Activated CD8-positive, alpha-beta memory T cell treated with anti-CD3 and anti-CD28 coated beads, Interleukin-2, amount 10 ng/mL, durations not matched to agents 7 days and 5 days (primary cell): ENCODE measurements at regions of chr20 and their contacts with region 1.

Region 1: DNA sequence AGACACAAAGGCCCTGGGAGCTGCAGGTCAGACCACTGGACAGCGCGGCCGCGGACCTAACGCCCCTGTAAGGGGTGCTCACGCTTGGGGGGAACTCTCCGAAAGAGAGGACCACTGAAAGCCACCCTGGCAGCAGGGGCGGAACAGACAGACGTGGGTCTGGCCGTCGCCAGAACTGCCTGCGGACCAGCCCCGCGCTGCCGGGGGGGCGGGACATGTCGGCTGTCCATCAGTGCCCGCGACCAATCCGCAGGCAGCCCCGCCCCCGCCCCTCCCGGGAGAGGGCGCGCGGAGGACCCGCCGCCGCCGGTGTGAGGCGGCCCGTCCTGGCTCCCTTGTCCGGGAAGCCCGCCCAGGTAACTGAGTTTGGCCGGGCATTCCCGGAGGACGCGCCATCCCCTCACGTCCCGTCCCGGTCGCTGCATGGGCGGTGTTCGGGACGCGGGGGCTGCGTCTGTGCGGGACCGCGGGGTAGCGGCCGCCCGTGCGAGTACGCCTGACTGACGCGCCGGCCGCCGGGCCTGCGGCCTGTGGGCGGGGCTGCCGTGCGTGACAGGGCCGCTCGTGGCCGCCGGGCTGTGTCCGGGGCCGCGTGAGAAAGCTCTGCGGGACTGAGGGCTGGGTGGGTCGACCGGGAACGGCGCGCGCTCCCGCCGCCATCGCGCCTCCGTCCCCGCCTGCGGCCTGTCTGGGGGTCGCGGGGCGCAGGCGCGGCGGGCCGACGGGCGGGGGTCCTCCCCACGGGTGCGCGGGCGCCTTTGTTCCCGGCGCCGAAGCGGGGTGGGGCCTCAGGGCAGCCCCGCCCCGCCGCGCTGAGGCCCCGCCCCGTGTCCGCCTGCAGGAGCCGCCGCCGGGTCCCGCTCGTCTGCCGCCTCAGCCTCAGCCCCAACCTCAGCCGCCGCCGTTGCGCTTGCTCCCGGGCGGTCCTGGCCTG is at the start of gene PLCG1:
- DNase-seq: peak; percentile 90
- ATAC-seq: peak; percentile 68
- H3K4me3 Mint-ChIP-seq: peak within 1 kb of the TSS; percentile 91
- H3K27ac Mint-ChIP-seq: peak within 1 kb of the TSS; percentile 90
- H3K4me1 Mint-ChIP-seq: peaks cover 51% of the 10 kb centered on the region
- H3K27me3 Mint-ChIP-seq: no peaks in the 10 kb centered on the region
- total RNA-seq, gene PLCG1: 201 to 337 TPM

Region 2: DNA sequence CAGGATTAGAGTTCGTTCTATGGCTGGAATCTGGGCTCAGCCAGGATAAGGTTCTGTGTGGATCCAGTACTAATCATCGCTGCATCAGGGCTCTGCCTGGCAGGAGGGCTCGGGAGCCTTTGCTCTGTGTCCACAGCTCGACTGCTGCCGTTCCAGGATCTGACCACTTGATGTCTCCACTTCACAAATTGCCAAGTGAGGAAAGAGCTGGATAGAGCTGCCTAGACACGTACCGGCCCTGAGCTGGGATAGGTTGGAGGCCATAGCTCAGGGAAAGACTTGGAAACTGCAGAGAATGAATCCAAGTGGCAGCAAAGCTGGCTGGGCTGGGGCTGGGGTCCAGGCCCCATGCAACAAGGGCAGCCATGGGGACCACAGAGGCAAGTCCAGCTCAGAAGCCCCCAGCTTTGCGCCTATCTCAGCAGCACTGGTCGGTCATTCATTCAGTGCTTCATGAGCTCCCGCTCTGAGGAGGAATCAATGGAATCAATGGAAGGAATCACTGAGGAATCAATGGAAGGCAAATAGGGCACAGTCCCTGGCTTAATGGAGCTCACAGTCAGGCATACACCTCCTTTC is 146.3 kb before region 1 on chr20:
- CTCF ChIA-PET with region 1: interaction called, 23 read pairs
- DNase-seq: peak; percentile 88
- ATAC-seq: peak; percentile 94
- H3K4me3 Mint-ChIP-seq: no peak overlapping the region
- H3K27ac Mint-ChIP-seq: peak overlapping the region; percentile 87
- H3K4me1 Mint-ChIP-seq: peaks cover 51% of the 10 kb centered on the region
- H3K27me3 Mint-ChIP-seq: no peaks in the 10 kb centered on the region

Region 3: GRCh38 chr20:41125530-41126457 is 11.2 kb before region 1 on chr20:
- CTCF ChIA-PET with region 1: interaction called, 36 read pairs
- DNase-seq: no peak
- ATAC-seq: no peak
- H3K4me3 Mint-ChIP-seq: no peak overlapping the region
- H3K27ac Mint-ChIP-seq: no peak overlapping the region
- H3K4me1 Mint-ChIP-seq: peaks cover 11% of the 10 kb centered on the region
- H3K27me3 Mint-ChIP-seq: no peaks in the 10 kb centered on the region

Region 4: DNA sequence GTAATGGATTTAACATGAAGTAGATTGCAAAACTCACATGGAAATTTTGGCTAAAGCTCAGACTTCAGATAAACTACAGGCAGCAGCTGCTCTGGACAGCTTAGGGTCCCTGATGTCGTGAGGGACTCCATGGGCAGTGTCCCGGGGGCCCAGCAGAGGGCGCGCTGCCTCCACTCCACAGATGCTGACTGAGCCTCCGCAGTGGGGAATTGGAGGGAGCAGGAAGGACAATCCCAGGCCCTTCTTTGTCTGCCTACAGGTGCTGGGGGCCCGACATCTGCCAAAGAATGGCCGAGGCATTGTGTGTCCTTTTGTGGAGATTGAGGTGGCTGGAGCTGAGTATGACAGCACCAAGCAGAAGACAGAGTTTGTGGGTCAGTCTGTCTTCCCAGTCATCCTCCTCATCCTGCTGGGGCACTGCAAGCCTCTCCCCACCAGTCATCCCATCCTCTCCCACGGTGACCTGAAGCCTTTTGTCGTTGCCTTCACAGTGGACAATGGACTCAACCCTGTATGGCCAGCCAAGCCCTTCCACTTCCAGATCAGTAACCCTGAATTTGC is 36.3 kb after region 1 on chr20:
- CTCF ChIA-PET with region 1: interaction called, 30 read pairs
- DNase-seq: peak; percentile 63
- ATAC-seq: peak; percentile 81
- H3K4me3 Mint-ChIP-seq: no peak overlapping the region
- H3K27ac Mint-ChIP-seq: no peak overlapping the region
- H3K4me1 Mint-ChIP-seq: peaks cover 15% of the 10 kb centered on the region
- H3K27me3 Mint-ChIP-seq: no peaks in the 10 kb centered on the region

Region 5: DNA sequence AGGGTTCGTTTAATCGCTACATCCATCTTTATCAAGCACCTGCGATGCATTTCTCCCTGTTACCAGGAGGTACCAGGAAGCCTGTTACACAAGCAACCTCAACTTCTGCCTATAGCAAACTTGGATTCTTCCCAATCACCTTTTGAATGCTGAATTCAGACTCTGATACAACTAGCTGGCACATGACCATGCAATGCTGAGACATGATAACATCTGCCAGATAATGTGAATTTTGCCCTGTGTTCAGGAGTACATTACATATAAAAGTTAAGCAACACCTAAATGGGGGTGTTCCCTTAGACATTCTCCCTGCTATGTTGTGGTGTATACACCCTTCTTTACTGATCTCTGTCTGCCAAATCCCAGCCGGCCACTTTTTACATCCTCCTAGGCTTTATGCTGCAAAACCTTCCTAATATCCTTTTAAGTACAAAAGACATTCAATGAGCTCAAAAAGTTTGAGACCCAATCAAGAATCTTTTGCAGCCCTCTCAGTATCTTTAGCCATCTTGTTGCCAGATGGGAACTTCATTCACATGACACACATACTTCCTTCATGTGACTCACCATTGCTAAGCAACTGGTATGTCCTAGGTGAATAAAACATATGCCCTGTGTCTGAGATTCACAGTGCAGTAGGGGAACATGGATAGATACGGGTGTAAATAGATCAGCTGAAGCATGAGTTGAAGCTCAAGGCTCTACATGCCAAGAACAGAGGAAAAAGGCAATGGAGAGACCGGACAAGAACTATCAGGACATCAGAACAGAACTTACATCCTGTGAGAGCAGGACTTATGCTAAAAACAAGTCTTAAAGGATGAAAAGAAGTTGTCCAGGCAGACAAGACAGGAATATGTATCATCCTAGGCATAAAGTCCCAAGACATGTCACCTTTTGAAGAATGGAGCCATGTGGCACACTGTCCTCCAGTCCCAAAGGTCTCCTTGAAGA is 96.3 kb after region 1 on chr20:
- CTCF ChIA-PET with region 1: interaction called, 101 read pairs
- DNase-seq: no peak
- ATAC-seq: no peak
- H3K4me3 Mint-ChIP-seq: no peak overlapping the region
- H3K27ac Mint-ChIP-seq: no peak overlapping the region
- H3K4me1 Mint-ChIP-seq: peaks cover 27% of the 10 kb centered on the region
- H3K27me3 Mint-ChIP-seq: no peaks in the 10 kb centered on the region

Region 6: DNA sequence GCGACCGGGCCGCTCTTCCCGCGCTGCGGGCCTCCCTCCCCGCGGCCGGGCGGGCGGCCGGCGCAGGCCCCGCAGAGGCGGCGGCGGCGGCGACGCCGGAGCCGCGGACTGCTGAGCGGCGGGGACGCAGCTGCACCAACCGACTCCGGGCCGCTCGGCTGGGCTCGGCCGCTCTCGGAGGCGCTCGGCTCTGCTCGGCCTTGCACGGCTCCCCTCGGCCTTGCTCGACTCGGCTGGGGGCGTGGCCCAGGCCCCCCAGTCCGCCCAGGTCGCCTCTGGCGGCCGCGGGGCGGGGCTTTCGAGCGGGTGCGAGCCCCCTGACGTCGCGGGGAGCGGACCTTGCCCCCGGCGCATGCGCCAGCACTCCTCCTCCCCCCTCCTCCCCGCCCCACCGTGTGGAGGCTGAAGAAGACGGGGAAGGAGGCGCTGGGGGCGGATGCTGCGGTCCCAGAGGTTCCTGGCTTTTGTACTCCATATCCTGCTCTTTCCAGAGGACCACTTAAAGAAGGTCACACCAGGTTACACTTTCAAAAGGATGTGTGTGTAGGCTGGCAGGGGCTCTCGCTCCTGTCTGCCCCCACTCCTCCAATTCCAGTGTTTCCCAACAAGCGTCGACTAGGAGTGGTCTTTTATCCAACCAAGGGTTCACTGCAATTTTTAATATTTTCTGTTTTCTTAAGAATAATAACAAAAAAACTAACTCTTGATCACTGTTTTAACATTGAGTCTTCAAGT is 180.8 kb after region 1 on chr20 and contains the start of gene ZHX3:
- CTCF ChIA-PET with region 1: interaction called, 10 read pairs
- DNase-seq: peak; percentile 98
- ATAC-seq: peak; percentile 99
- H3K4me3 Mint-ChIP-seq: peak within 1 kb of the TSS; percentile 81
- H3K27ac Mint-ChIP-seq: peak within 1 kb of the TSS; percentile 84
- H3K4me1 Mint-ChIP-seq: peaks cover 25% of the 10 kb centered on the region
- H3K27me3 Mint-ChIP-seq: peaks cover 6% of the 10 kb centered on the region
- total RNA-seq, gene ZHX3: 11.4 to 13.3 TPM